ENCODE measurements at regions of chr13 and their contacts with region 1.

Region 1: DNA sequence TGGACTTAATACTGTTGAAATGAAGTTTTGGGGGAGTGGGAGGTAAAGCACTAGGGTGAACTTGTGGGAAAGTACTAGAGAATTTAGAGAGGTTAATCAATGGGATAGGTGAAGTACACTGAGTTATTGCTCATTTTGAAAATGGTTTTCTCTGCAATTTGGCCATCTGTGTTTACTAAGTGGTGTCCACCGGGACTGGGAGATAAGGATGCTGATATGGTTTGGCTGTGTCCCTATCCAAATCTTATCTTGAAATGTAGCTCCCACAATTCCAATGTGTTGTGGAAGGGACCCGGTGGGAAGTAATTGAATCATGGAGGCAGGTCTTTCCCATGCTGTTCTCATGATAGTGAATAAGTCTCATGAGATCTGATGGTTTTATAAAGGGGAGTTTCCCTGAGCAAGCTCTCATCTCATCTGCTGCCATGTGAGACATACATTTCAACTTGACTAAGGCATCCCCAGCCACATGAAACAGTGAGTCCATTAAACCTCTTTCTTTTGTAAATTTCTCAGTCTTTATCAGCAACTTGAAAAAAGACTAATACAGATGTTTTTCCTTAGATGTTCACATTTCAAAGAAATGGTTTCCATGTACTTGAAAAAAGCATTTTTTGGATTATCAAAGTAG is 1569.4 kb upstream of the PRR20A start:
- DNase-seq: no peak
- H3K4me3 ChIP-seq: no peak overlapping the region
- H3K27ac ChIP-seq: no peak overlapping the region
- H3K4me1 ChIP-seq: peaks cover 0 to 7% (median 3%) of the 10 kb centered on the region in 4 experiments; a peak in 3 of 7 replicates
- H3K27me3 ChIP-seq: no peaks in the 10 kb centered on the region
- CTCF ChIP-seq: no peak
- EP300 ChIP-seq: no peak
- POLR2A ChIP-seq: peak; percentile 71 to 96
- RAD21 ChIP-seq: no peak

Region 2: GRCh38 chr13:55653497-55653896 is 82.1 kb after region 1 on chr13:
- CTCF ChIA-PET with region 1: no interaction called
- POLR2A ChIA-PET with region 1: interaction called, 22 read pairs
- DNase-seq: no peak
- H3K4me3 ChIP-seq: peak overlapping the region in 1 of 4 experiments; percentile 44; a peak in 1 of 8 replicates
- H3K27ac ChIP-seq: no peak overlapping the region
- H3K4me1 ChIP-seq: peaks cover 0 to 17% (median 3%) of the 10 kb centered on the region in 4 experiments; a peak in 3 of 7 replicates
- H3K27me3 ChIP-seq: no peaks in the 10 kb centered on the region
- CTCF ChIP-seq: no peak
- EP300 ChIP-seq: no peak
- POLR2A ChIP-seq: peak in 1 of 2 experiments; percentile 2; a peak in 1 of 3 replicates
- RAD21 ChIP-seq: no peak

Region 3: DNA sequence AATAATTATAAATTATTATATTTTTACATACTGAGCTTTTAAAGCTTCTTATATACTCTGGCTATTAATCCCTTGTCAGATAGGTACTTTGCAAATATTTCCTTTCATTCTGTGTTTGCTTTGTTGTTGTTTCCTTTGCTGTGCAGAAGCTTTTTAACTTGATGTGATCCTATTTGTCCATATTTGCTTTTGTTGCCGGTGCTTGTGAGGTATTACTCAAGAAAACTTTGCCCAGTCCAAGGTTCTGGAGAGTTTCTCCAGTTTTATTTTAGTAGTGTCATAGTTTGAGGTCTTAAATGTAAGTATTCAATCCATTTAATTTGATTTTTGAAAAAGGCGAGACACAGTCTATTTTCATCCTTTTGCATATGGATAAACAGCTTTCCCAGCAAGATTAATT is 249.5 kb after region 1 on chr13:
- CTCF ChIA-PET with region 1: no interaction called
- POLR2A ChIA-PET with region 1: no interaction called
- DNase-seq: no peak
- H3K4me3 ChIP-seq: no peak overlapping the region
- H3K27ac ChIP-seq: no peak overlapping the region
- H3K4me1 ChIP-seq: no peaks in the 10 kb centered on the region
- H3K27me3 ChIP-seq: no peaks in the 10 kb centered on the region
- CTCF ChIP-seq: no peak
- EP300 ChIP-seq: no peak
- POLR2A ChIP-seq: no peak
- RAD21 ChIP-seq: no peak

Measured in H1 (cell line).